Activated CD8-positive, alpha-beta T cell treated with anti-CD3 and anti-CD28 coated beads, Interleukin-2, amount 10 ng/mL, durations not matched to agents 7 days and 5 days (primary cell): ENCODE measurements at regions of chr15 and their contacts with region 1.

Region 1: DNA sequence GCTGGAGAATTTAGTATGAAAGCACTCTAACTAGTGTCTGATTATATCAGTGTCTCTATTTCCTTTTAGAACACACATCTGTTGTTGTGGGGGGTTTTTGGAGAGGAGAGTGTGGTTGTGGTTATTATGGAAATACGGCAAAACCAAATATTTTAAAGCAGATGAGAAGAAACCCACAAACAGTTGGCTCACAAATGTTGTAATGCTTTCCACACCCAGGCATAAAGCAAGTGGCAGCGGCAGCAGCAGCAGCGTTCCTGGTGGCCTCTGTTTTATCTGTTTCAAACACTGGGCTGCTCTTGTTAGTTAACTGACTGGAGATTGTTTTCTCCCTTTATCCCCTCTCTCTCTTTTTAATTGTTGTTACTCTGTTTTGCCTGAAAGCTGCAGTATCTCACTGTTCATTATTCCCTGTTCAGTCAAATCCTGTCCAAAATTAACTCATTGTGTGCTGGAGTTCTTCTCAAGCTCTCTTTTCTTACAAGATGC is 1045.5 kb upstream of the NR2F2 start:
- DNase-seq: peak; percentile 74
- ATAC-seq: peak; percentile 97
- H3K4me3 Mint-ChIP-seq: peak overlapping the region; percentile 31
- H3K27ac Mint-ChIP-seq: peak overlapping the region; percentile 74
- H3K4me1 Mint-ChIP-seq: peaks cover 35% of the 10 kb centered on the region
- H3K27me3 Mint-ChIP-seq: peaks cover 47% of the 10 kb centered on the region

Region 2: GRCh38 chr15:94924057-94924456 is 360.9 kb before region 1 on chr15:
- CTCF ChIA-PET with region 1: no interaction called
- POLR2A ChIA-PET with region 1: no interaction called
- DNase-seq: no peak
- ATAC-seq: no peak
- H3K4me3 Mint-ChIP-seq: no peak overlapping the region
- H3K27ac Mint-ChIP-seq: no peak overlapping the region
- H3K4me1 Mint-ChIP-seq: no peaks in the 10 kb centered on the region
- H3K27me3 Mint-ChIP-seq: no peaks in the 10 kb centered on the region

Region 3: GRCh38 chr15:95259513-95259912 is 25.5 kb before region 1 on chr15:
- CTCF ChIA-PET with region 1: interaction called, 44 read pairs
- POLR2A ChIA-PET with region 1: interaction called, 4 read pairs
- DNase-seq: peak; percentile 73
- ATAC-seq: peak; percentile 68
- H3K4me3 Mint-ChIP-seq: no peak overlapping the region
- H3K27ac Mint-ChIP-seq: no peak overlapping the region
- H3K4me1 Mint-ChIP-seq: peaks cover 7% of the 10 kb centered on the region
- H3K27me3 Mint-ChIP-seq: peaks cover 53% of the 10 kb centered on the region